ENCODE measurements at regions of chr1 and their contacts with region 1.

Region 1: GRCh38 chr1:7042322-7043190 is 257.3 kb downstream of the CAMTA1 start:
- DNase-seq: peak in 1 of 2 experiments; percentile 56
- H3K4me3 ChIP-seq: no peak overlapping the region
- H3K27ac ChIP-seq: no peak overlapping the region
- H3K4me1 ChIP-seq: peaks cover 0 to 11% (median 5%) of the 10 kb centered on the region in 4 experiments; a peak in 5 of 7 replicates
- H3K27me3 ChIP-seq: no peaks in the 10 kb centered on the region
- CTCF ChIP-seq: peak in 2 of 3 experiments; percentile 65 to 67; a peak in 3 of 4 replicates
- EP300 ChIP-seq: no peak
- POLR2A ChIP-seq: no peak
- RAD21 ChIP-seq: peak; percentile 69 to 74

Region 2: GRCh38 chr1:6832531-6833188 is 209.9 kb before region 1 on chr1:
- CTCF ChIA-PET with region 1: no interaction called
- POLR2A ChIA-PET with region 1: no interaction called
- DNase-seq: no peak
- H3K4me3 ChIP-seq: no peak overlapping the region
- H3K27ac ChIP-seq: no peak overlapping the region
- H3K4me1 ChIP-seq: no peaks in the 10 kb centered on the region
- H3K27me3 ChIP-seq: no peaks in the 10 kb centered on the region
- CTCF ChIP-seq: no peak
- EP300 ChIP-seq: no peak
- POLR2A ChIP-seq: no peak
- RAD21 ChIP-seq: no peak

Region 3: DNA sequence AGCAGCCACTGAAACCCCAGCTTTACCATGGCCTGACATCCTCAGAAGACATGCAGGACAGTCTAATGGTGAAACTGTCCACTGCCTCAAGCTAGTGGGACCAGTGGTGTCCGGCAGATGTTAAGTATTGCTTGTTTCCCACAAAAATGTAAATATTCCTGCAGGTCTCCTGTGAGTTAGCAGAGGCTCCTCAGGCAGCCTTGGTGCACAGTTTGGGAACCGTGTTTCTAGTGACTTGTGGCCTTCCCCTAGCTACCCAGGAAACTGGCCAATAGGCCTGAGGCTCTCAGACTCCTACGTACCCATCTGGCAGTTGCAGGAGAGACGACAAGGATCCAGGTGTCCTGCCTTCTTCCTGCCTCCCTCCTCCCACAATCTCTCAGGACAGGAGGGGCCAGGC is 114.9 kb before region 1 on chr1:
- CTCF ChIA-PET with region 1: interaction called, 12 read pairs
- POLR2A ChIA-PET with region 1: no interaction called
- DNase-seq: no peak
- H3K4me3 ChIP-seq: no peak overlapping the region
- H3K27ac ChIP-seq: no peak overlapping the region
- H3K4me1 ChIP-seq: no peaks in the 10 kb centered on the region; a peak in 1 of 7 replicates
- H3K27me3 ChIP-seq: no peaks in the 10 kb centered on the region
- CTCF ChIP-seq: no peak
- EP300 ChIP-seq: no peak
- POLR2A ChIP-seq: no peak
- RAD21 ChIP-seq: no peak

Region 4: DNA sequence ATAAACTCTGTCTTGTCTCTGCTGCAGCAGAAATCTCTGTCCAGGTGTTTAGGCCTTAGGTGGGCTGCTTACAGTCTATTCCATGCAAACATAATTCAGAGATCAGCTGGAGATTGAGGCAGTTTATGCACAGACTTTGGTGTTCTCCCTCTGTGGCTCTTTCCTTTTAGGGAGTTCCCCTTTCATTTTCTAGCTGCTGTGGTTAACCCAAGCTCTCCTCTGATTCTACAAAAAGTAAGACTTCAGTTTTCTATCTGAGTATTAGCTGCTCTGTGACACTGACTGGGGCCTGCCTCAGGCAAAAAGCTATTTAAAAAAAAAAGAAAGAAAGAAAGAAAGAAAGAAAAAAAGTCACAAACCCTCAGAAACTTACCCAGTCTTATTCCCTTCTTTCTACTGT is 46.2 kb before region 1 on chr1:
- CTCF ChIA-PET with region 1: interaction called, 10 read pairs
- POLR2A ChIA-PET with region 1: no interaction called
- DNase-seq: no peak
- H3K4me3 ChIP-seq: no peak overlapping the region
- H3K27ac ChIP-seq: no peak overlapping the region
- H3K4me1 ChIP-seq: peaks cover 3 to 7% (median 5%) of the 10 kb centered on the region in 4 experiments; a peak in 6 of 7 replicates
- H3K27me3 ChIP-seq: no peaks in the 10 kb centered on the region
- CTCF ChIP-seq: no peak
- EP300 ChIP-seq: no peak
- POLR2A ChIP-seq: no peak
- RAD21 ChIP-seq: no peak

Region 5: DNA sequence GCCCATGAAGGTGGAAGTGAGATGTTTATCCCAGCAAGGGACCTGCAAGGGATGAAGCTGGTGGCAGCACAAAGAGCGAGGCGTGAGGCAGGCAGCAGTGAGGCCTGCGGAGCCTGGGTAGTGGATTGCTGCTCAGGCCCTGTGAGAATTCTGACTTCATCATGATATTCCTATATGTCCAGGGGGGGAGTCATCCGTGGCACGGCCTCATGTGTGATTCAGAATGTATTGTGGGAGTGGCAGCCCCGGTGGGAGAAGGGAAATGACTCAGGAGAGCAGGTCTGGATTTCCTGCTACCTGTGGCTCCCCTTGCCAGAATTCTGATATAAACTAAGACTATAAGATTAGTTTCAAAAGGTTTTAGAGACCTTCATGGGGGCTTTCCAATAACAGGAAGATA is 16.4 kb before region 1 on chr1:
- CTCF ChIA-PET with region 1: interaction called, 24 read pairs
- POLR2A ChIA-PET with region 1: no interaction called
- DNase-seq: no peak
- H3K4me3 ChIP-seq: no peak overlapping the region
- H3K27ac ChIP-seq: no peak overlapping the region
- H3K4me1 ChIP-seq: peaks cover 2 to 7% (median 5%) of the 10 kb centered on the region in 4 experiments; a peak in 6 of 7 replicates
- H3K27me3 ChIP-seq: no peaks in the 10 kb centered on the region
- CTCF ChIP-seq: no peak
- EP300 ChIP-seq: no peak
- POLR2A ChIP-seq: no peak
- RAD21 ChIP-seq: no peak

Region 6: GRCh38 chr1:7070389-7071029 is 28.0 kb after region 1 on chr1:
- CTCF ChIA-PET with region 1: interaction called, 107 read pairs
- POLR2A ChIA-PET with region 1: interaction called, 3 read pairs
- DNase-seq: peak; percentile 60 to 81
- H3K4me3 ChIP-seq: peak overlapping the region; percentile 17 to 64 (median 56); a peak in 7 of 8 replicates
- H3K27ac ChIP-seq: no peak overlapping the region
- H3K4me1 ChIP-seq: peaks cover 0 to 3% (median 2%) of the 10 kb centered on the region in 4 experiments; a peak in 3 of 7 replicates
- H3K27me3 ChIP-seq: peaks cover 0 to 5% (median 1%) of the 10 kb centered on the region in 4 experiments; a peak in 1 of 7 replicates
- CTCF ChIP-seq: peak; percentile 83 to 98 (median 97)
- EP300 ChIP-seq: no peak
- POLR2A ChIP-seq: no peak
- RAD21 ChIP-seq: peak; percentile 79 to 88

Region 7: GRCh38 chr1:7084232-7084894 is 41.8 kb after region 1 on chr1:
- CTCF ChIA-PET with region 1: interaction called, 15 read pairs
- POLR2A ChIA-PET with region 1: interaction called, 3 read pairs
- DNase-seq: no peak
- H3K4me3 ChIP-seq: no peak overlapping the region
- H3K27ac ChIP-seq: no peak overlapping the region
- H3K4me1 ChIP-seq: peaks cover 0 to 4% (median 0%) of the 10 kb centered on the region in 4 experiments; a peak in 2 of 7 replicates
- H3K27me3 ChIP-seq: no peaks in the 10 kb centered on the region
- CTCF ChIP-seq: peak; percentile 28 to 49 (median 42); a peak in 3 of 4 replicates
- EP300 ChIP-seq: no peak
- POLR2A ChIP-seq: no peak
- RAD21 ChIP-seq: no peak; a peak in 2 of 4 replicates

Region 8: DNA sequence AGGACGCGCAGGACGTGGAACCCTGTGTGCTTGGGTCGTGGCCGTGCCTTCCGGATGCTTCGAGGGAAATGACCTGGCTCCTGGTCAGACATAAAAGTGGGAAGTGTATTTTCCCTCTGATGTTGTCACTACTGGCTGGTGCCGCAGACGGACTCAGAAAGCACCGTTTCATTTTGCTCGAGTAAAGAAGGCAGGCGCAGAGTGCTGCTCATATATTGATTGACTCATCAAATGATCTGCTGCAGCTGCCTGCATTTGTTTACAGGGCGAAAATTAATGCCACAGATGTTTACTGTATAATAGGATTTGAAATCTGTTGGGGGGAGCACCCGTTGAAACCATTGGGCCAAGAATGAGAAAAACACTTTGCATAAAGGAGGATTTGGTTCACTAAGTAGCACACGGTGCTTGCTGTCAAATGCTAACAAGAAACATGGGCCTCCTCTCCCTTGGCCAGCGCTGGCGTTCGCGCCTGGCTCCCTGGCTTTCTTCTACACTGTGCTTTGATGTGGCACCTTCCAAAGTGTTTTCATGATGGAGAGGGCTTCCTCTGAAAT is 108.2 kb after region 1 on chr1:
- CTCF ChIA-PET with region 1: no interaction called
- POLR2A ChIA-PET with region 1: no interaction called
- DNase-seq: no peak
- H3K4me3 ChIP-seq: no peak overlapping the region
- H3K27ac ChIP-seq: no peak overlapping the region
- H3K4me1 ChIP-seq: peaks cover 3 to 28% (median 16%) of the 10 kb centered on the region in 4 experiments
- H3K27me3 ChIP-seq: no peaks in the 10 kb centered on the region
- CTCF ChIP-seq: no peak
- EP300 ChIP-seq: no peak
- POLR2A ChIP-seq: no peak
- RAD21 ChIP-seq: no peak

Region 9: GRCh38 chr1:7207875-7208646 is 165.5 kb after region 1 on chr1:
- CTCF ChIA-PET with region 1: interaction called, 70 read pairs
- POLR2A ChIA-PET with region 1: no interaction called
- DNase-seq: peak; percentile 59 to 86
- H3K4me3 ChIP-seq: no peak overlapping the region
- H3K27ac ChIP-seq: no peak overlapping the region
- H3K4me1 ChIP-seq: peaks cover 0 to 2% (median 0%) of the 10 kb centered on the region in 4 experiments; a peak in 1 of 7 replicates
- H3K27me3 ChIP-seq: no peaks in the 10 kb centered on the region
- CTCF ChIP-seq: peak; percentile 95 to 99 (median 97)
- EP300 ChIP-seq: no peak
- POLR2A ChIP-seq: no peak
- RAD21 ChIP-seq: peak; percentile 99